H1 (cell line): ENCODE measurements at regions of chr18 and their contacts with region 1.

Region 1: GRCh38 chr18:12278741-12279682 is 24.9 kb downstream of the CIDEA start:
- DNase-seq: peak; percentile 78
- H3K4me3 ChIP-seq: peak overlapping the region in 2 of 4 experiments; percentile 2 to 14; a peak in 2 of 8 replicates
- H3K27ac ChIP-seq: peak overlapping the region; percentile 37; the same call in 1 of the 2 replicates
- H3K4me1 ChIP-seq: peaks cover 0 to 10% (median 7%) of the 10 kb centered on the region in 4 experiments; a peak in 6 of 7 replicates
- H3K27me3 ChIP-seq: no peaks in the 10 kb centered on the region
- CTCF ChIP-seq: no peak
- EP300 ChIP-seq: no peak
- POLR2A ChIP-seq: peak in 1 of 2 experiments; percentile 71; a peak in 2 of 3 replicates
- RAD21 ChIP-seq: no peak

Region 2: GRCh38 chr18:12302391-12303147 is 23.6 kb after region 1 on chr18:
- CTCF ChIA-PET with region 1: interaction called, 12 read pairs
- POLR2A ChIA-PET with region 1: interaction called, 49 read pairs
- DNase-seq: no peak
- H3K4me3 ChIP-seq: no peak overlapping the region
- H3K27ac ChIP-seq: no peak overlapping the region
- H3K4me1 ChIP-seq: peaks cover 0 to 13% (median 11%) of the 10 kb centered on the region in 4 experiments; a peak in 6 of 7 replicates
- H3K27me3 ChIP-seq: peaks cover 0 to 28% (median 18%) of the 10 kb centered on the region in 4 experiments; a peak in 5 of 7 replicates
- CTCF ChIP-seq: no peak
- EP300 ChIP-seq: no peak
- POLR2A ChIP-seq: no peak
- RAD21 ChIP-seq: no peak

Region 3: GRCh38 chr18:12317664-12318333 is 38.8 kb after region 1 on chr18:
- CTCF ChIA-PET with region 1: interaction called, 18 read pairs
- POLR2A ChIA-PET with region 1: no interaction called
- DNase-seq: no peak
- H3K4me3 ChIP-seq: no peak overlapping the region
- H3K27ac ChIP-seq: no peak overlapping the region
- H3K4me1 ChIP-seq: no peaks in the 10 kb centered on the region
- H3K27me3 ChIP-seq: no peaks in the 10 kb centered on the region
- CTCF ChIP-seq: no peak
- EP300 ChIP-seq: no peak
- POLR2A ChIP-seq: no peak
- RAD21 ChIP-seq: no peak

Region 4: GRCh38 chr18:12336171-12336613 is 57.2 kb after region 1 on chr18:
- CTCF ChIA-PET with region 1: interaction called, 5 read pairs
- POLR2A ChIA-PET with region 1: interaction called, 26 read pairs
- DNase-seq: peak; percentile 63 to 74
- H3K4me3 ChIP-seq: peak overlapping the region in 2 of 4 experiments; percentile 8 to 43; a peak in 2 of 8 replicates
- H3K27ac ChIP-seq: peak overlapping the region; percentile 79
- H3K4me1 ChIP-seq: peaks cover 15 to 41% (median 39%) of the 10 kb centered on the region in 4 experiments
- H3K27me3 ChIP-seq: no peaks in the 10 kb centered on the region
- CTCF ChIP-seq: no peak
- EP300 ChIP-seq: peak in 1 of 2 experiments; percentile 80; a peak in 1 of 3 replicates
- POLR2A ChIP-seq: 0 out of 3 replicates have a peak, but pooled peaks of 1 of the 2 experiments have one; percentile 7
- RAD21 ChIP-seq: no peak

Region 5: GRCh38 chr18:12352188-12352587 is 73.2 kb after region 1 on chr18:
- CTCF ChIA-PET with region 1: interaction called, 10 read pairs
- POLR2A ChIA-PET with region 1: interaction called, 4 read pairs
- DNase-seq: no peak
- H3K4me3 ChIP-seq: no peak overlapping the region
- H3K27ac ChIP-seq: no peak overlapping the region
- H3K4me1 ChIP-seq: no peaks in the 10 kb centered on the region
- H3K27me3 ChIP-seq: no peaks in the 10 kb centered on the region
- CTCF ChIP-seq: no peak
- EP300 ChIP-seq: no peak
- POLR2A ChIP-seq: no peak
- RAD21 ChIP-seq: no peak

Region 6: GRCh38 chr18:12376718-12377555 is 97.9 kb after region 1 on chr18 and contains the start of gene AFG3L2:
- CTCF ChIA-PET with region 1: interaction called, 11 read pairs
- POLR2A ChIA-PET with region 1: interaction called, 3 read pairs
- DNase-seq: peak; percentile 99 to 100
- H3K4me3 ChIP-seq: peak within 1 kb of the TSS; percentile 65 to 89 (median 78)
- H3K27ac ChIP-seq: peak within 1 kb of the TSS; percentile 90
- H3K4me1 ChIP-seq: peaks cover 3 to 15% (median 7%) of the 10 kb centered on the region in 4 experiments
- H3K27me3 ChIP-seq: no peaks in the 10 kb centered on the region
- CTCF ChIP-seq: no peak
- EP300 ChIP-seq: no peak
- POLR2A ChIP-seq: peak; percentile 73 to 79
- RAD21 ChIP-seq: no peak
- total RNA-seq, gene AFG3L2: 81.7 and 84.8 TPM in 2 replicates